ENCODE measurements at regions of chr12 and their contacts with region 1.

Region 1: DNA sequence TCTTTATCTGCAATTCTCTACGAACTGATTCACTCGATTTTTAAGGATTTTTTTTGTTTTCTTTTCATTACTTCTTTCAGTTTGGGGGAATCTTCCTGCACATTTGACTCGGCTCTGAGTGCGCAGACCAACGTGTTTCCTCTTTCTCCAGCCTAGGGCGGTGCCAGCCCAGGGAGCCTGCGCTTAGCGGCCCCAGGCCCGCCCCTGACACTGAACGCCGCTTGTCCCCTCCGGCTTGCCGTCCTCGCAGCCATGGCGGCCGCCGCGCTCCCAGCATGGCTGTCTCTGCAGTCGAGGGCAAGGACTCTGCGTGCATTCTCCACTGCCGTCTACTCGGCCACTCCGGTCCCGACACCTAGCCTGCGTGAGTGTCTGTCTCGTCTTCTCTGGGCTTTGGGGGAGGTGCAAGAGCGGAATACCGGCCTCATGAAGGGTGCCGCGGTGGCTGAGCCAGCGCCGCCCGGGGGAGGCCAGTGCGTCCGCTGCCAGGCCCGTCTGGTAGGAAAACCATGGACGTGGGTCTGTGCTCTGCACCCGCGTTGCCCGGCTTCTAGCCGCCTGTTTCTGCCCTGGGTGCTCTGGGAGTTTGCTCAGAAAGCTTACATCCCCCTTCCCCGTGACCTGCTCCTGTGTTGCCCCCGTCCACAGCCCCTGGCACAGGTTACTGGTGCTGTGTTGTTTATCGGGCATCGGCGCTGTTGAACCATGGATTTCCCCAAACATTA is at the start of gene MRPS35:
- DNase-seq: peak; percentile 93 to 95
- ATAC-seq: peak; percentile 98 to 99 (median 99)
- H3K4me3 ChIP-seq: peak within 1 kb of the TSS; percentile 94
- H3K27ac ChIP-seq: peak within 1 kb of the TSS; percentile 84
- H3K4me1 ChIP-seq: peaks cover 14% of the 10 kb centered on the region
- H3K27me3 ChIP-seq: peaks cover 0 to 2% (median 0%) of the 10 kb centered on the region in 3 donors
- CTCF ChIP-seq: no peak
- total RNA-seq, gene MRPS35: 48.8 to 79.9 (median 58.3) TPM

Region 2: DNA sequence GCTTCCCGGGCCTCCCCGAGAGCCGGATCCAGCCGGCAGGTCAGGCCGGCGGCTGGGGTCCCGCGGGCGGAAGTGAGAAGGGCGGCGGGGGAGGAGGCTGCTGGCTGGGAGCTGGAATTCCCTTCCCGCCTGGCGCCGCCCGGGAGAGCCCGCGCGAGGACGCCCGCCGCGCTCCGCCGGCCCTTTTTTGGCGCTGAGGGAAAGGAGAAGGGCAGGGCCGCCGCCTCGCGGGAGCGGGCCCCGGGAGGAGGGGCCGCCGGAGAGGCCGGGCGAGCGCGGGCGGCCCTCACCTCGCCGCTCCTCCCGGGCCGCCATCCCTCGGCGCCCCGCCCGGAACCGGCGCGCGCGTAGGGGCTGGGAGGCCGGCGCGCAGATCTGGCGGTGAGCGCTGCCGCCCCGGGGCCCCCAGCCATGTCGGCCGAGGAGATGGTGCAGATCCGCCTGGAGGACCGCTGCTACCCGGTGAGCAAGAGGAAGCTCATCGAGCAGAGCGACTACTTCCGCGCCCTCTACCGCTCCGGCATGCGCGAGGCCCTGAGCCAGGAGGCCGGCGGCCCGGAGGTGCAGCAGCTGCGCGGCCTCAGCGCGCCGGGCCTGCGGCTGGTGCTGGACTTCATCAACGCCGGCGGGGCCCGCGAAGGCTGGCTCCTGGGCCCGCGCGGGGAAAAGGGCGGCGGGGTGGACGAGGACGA is 69.3 kb after region 1 on chr12 and contains the starts of genes KLHL42 and MANSC4:
- intact Hi-C with region 1: loop called in 1 of 2 experiments (anchors 5 kb)
- DNase-seq: peak; percentile 76 to 87
- ATAC-seq: peak; percentile 86 to 94 (median 91)
- H3K4me3 ChIP-seq: peak within 1 kb of the TSS; percentile 82
- H3K27ac ChIP-seq: peak within 1 kb of the TSS; percentile 78
- H3K4me1 ChIP-seq: peaks cover 9% of the 10 kb centered on the region
- H3K27me3 ChIP-seq: no peaks in the 10 kb centered on the region
- CTCF ChIP-seq: no peak
- total RNA-seq, gene KLHL42: 2.2 to 4.6 (median 3.3) TPM
- total RNA-seq, gene MANSC4: not detected